WTC11 (cell line): ENCODE measurements at regions of chr7 and their contacts with region 1.

Region 1: GRCh38 chr7:155020996-155021395 is 18.1 kb upstream of the PAXIP1 start:
- DNase-seq: peak; percentile 20
- ATAC-seq: peak; percentile 91
- H3K4me3 Mint-ChIP-seq: no peak overlapping the region
- H3K27ac Mint-ChIP-seq: no peak overlapping the region
- H3K4me1 Mint-ChIP-seq: peaks cover 7% of the 10 kb centered on the region
- H3K27me3 Mint-ChIP-seq: peaks cover 2% of the 10 kb centered on the region; the same call in 1 of the 2 replicates
- CTCF ChIP-seq: no peak

Region 2: DNA sequence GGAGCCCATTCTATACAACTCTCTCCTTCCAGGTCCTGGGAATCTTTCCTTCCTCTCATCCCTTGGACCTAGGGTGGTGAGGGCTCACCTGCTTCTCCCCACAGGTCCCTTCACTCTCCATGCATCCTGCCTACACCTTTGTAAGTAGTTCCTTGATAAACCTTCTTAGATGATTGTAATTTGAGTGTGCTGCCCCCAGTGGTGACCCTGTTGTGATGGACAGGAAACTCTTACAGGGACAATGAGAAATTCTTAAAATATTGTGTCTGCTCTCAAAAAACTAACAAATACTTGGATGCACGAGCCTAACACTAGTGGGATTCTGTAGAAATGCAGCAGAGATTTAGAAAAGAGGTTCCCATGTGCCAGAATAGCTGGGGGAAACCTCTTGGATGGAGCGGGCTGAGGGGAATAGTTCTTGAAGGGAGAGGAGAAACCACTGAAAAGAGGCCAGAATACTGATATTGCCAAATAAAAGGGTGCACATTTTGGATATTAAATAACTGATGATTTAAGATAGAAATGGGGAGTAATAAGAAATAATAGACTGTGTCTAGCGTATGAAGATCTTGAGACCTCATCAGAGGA is 11.3 kb before region 1 on chr7:
- CTCF ChIA-PET with region 1: interaction called, 36 read pairs
- POLR2A ChIA-PET with region 1: interaction called, 7 read pairs
- DNase-seq: peak; percentile 45
- ATAC-seq: peak; percentile 68
- H3K4me3 Mint-ChIP-seq: no peak overlapping the region
- H3K27ac Mint-ChIP-seq: no peak overlapping the region
- H3K4me1 Mint-ChIP-seq: peaks cover 14% of the 10 kb centered on the region
- H3K27me3 Mint-ChIP-seq: no peaks in the 10 kb centered on the region
- CTCF ChIP-seq: no peak